Prostate gland (tissue), 2 donors: ENCODE measurements at regions of chr11 and their contacts with region 1.

Region 1: GRCh38 chr11:67401495-67402191 is at the start of gene PPP1CA:
- DNase-seq: peak; percentile 86
- H3K4me3 ChIP-seq: peak within 1 kb of the TSS; percentile 67 to 94
- H3K27ac ChIP-seq: peak within 1 kb of the TSS; percentile 86 to 96
- H3K4me1 ChIP-seq: peaks cover 15% of the 10 kb centered on the region
- H3K27me3 ChIP-seq: no peaks in the 10 kb centered on the region
- CTCF ChIP-seq: peak; percentile 38 to 82 (median 42)
- POLR2A ChIP-seq: peak; percentile 67
- total RNA-seq, gene PPP1CA: 168 to 215 TPM

Region 2: GRCh38 chr11:67468835-67469811 is 67.5 kb after region 1 on chr11 and contains the start of gene TMEM134:
- intact Hi-C with region 1: loop called (anchors 5 kb)
- DNase-seq: peak; percentile 90
- H3K4me3 ChIP-seq: peak within 1 kb of the TSS; percentile 84 to 87
- H3K27ac ChIP-seq: peak within 1 kb of the TSS; percentile 89 to 92
- H3K4me1 ChIP-seq: peaks cover 6% of the 10 kb centered on the region
- H3K27me3 ChIP-seq: no peaks in the 10 kb centered on the region
- CTCF ChIP-seq: peak; percentile 24 to 63 (median 48)
- POLR2A ChIP-seq: peak; percentile 80
- total RNA-seq, gene TMEM134: 106 to 402 TPM

Region 3: DNA sequence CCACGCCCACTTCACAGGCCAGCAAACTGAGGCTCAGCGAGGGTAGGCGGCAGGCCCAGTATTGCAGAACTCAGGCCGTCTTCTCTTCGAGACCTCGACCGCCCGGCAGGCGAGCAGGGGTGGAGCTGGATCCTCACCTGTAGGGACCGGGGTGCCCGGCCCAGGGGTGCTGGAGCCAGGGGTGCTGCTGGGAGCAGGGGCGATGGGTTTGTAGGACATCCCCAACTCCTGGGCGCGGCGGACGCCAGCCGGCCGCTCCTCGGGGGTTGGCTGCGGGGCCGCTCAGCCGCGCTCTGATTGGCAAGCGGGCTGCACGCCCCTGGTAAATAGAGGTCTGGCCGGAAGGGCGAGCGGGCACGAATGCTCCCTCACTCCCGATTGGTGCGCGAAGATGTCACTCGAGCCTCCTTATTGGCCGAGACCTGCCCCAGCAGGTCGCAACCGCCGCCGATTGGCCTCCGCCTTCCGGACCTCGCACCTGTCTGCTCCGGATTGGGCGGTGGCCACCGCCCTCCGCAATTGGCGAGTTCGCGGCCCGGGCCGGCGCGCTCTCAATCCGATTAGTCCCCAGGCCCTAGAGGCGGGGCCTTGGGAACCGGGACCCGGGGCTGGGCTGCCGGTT is 106.3 kb after region 1 on chr11 and contains the start of gene CDK2AP2:
- intact Hi-C with region 1: loop called (anchors 5 kb)
- DNase-seq: peak; percentile 99
- H3K4me3 ChIP-seq: peak within 1 kb of the TSS; percentile 71 to 74
- H3K27ac ChIP-seq: peak within 1 kb of the TSS; percentile 97 to 98
- H3K4me1 ChIP-seq: peaks cover 9% of the 10 kb centered on the region
- H3K27me3 ChIP-seq: no peaks in the 10 kb centered on the region
- CTCF ChIP-seq: peak in 1 of 4 experiments; percentile 8
- POLR2A ChIP-seq: peak; percentile 93
- total RNA-seq, gene CDK2AP2: 57.1 to 91.9 TPM